Endothelial cell of umbilical vein (primary cell): ENCODE measurements at regions of chr5 and their contacts with region 1.

Region 1: DNA sequence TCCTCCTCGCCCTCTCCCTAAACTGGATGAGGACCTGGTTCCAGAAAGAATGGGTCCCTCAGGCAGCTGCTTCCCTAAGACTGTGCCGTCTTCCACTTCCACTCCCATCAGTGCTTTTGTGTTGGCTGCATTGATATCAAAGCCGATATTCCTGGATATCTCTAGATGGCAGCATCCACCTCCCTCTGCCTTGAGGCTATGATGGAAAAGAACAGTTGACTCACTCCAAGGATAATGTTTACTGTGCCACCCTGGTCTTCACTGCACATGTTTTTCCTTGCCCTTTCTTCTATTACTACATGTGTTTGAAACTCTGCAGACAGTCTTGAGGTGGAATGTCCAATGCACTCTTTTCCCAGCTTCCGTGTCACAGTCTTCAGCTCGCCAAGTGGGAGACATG is 211.6 kb downstream of the MAST4 start:
- DNase-seq: peak; percentile 75
- H3K4me3 ChIP-seq: no peak overlapping the region
- H3K27ac ChIP-seq: no peak overlapping the region
- H3K4me1 ChIP-seq: no peaks in the 10 kb centered on the region
- H3K27me3 ChIP-seq: peaks cover 9 to 10% of the 10 kb centered on the region in 2 experiments
- CTCF ChIP-seq: peak; percentile 62 to 69
- POLR2A ChIP-seq: no peak

Region 2: GRCh38 chr5:67095346-67096171 is 287.8 kb after region 1 on chr5:
- CTCF ChIA-PET with region 1: no interaction called
- POLR2A ChIA-PET with region 1: no interaction called
- dilution Hi-C with region 1: no loop called
- intact Hi-C with region 1: loop called (anchors 5 kb)
- DNase-seq: peak; percentile 78
- H3K4me3 ChIP-seq: no peak overlapping the region
- H3K27ac ChIP-seq: no peak overlapping the region
- H3K4me1 ChIP-seq: peaks cover 17% of the 10 kb centered on the region
- H3K27me3 ChIP-seq: no peaks in the 10 kb centered on the region
- CTCF ChIP-seq: no peak
- POLR2A ChIP-seq: no peak

Region 3: GRCh38 chr5:67156976-67157583 is 349.3 kb after region 1 on chr5:
- CTCF ChIA-PET with region 1: no interaction called
- POLR2A ChIA-PET with region 1: no interaction called
- dilution Hi-C with region 1: no loop called
- intact Hi-C with region 1: loop called (anchors 10 kb)
- DNase-seq: peak; percentile 37
- H3K4me3 ChIP-seq: no peak overlapping the region
- H3K27ac ChIP-seq: no peak overlapping the region
- H3K4me1 ChIP-seq: no peaks in the 10 kb centered on the region
- H3K27me3 ChIP-seq: no peaks in the 10 kb centered on the region
- CTCF ChIP-seq: peak; percentile 65 to 71
- POLR2A ChIP-seq: no peak